Dorsolateral prefrontal cortex (tissue), 120 donors: ENCODE measurements at regions of chr1 and their contacts with region 1.

Region 1: GRCh38 chr1:169106095-169106920 is at the start of gene ATP1B1:
- DNase-seq: peak; percentile 79 to 95 (median 90)
- H3K4me3 ChIP-seq: peak within 1 kb of the TSS; percentile 71 to 99 (median 91)
- H3K27ac ChIP-seq: peak within 1 kb of the TSS; percentile 84 to 99 (median 97)
- H3K27me3 ChIP-seq: no peaks in the 10 kb centered on the region
- CTCF ChIP-seq: peak in 55 of 56 donors; percentile 26 to 89 (median 67)
- total RNA-seq, gene ATP1B1: 155 to 1,070 (median 769) TPM

Region 2: DNA sequence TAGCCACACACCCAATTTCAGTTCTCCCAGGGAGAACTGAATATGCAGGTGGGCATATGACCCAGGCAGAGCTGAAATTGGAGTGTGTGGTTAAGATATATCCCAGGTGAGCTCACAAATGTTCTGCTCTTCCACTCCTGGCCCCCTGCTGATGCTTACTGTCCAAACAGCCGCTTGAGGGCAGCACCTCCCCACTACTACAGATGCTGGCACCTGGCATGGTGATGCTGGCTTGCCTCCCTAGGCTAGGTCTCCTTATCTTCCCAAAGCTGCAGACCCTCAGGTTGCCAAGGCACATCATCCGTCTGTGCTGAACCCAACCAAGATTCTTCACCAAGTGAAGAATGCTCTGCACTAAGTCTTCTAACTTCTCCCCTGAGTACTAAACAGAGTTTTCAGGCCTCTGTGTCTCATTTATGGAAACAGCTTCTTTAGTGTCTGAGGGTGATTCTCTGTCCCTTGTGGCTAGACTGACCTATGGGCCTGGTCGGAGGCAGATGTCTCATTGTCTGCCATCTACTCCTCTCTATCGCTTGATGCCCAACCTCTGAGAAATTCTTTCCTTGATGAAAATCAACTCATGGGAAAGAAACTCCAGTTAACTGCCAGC is 502.7 kb before region 1 on chr1:
- intact Hi-C with region 1: loop called in 1 of 2 experiments (anchors 10 kb)
- DNase-seq: peak; percentile 66 to 89 (median 80)
- H3K4me3 ChIP-seq: no peak overlapping the region
- H3K27ac ChIP-seq: peak overlapping the region in 3 of 59 donors; percentile 2 to 13 (median 9)
- H3K27me3 ChIP-seq: no peaks in the 10 kb centered on the region
- CTCF ChIP-seq: peak; percentile 25 to 93 (median 85)

Region 3: DNA sequence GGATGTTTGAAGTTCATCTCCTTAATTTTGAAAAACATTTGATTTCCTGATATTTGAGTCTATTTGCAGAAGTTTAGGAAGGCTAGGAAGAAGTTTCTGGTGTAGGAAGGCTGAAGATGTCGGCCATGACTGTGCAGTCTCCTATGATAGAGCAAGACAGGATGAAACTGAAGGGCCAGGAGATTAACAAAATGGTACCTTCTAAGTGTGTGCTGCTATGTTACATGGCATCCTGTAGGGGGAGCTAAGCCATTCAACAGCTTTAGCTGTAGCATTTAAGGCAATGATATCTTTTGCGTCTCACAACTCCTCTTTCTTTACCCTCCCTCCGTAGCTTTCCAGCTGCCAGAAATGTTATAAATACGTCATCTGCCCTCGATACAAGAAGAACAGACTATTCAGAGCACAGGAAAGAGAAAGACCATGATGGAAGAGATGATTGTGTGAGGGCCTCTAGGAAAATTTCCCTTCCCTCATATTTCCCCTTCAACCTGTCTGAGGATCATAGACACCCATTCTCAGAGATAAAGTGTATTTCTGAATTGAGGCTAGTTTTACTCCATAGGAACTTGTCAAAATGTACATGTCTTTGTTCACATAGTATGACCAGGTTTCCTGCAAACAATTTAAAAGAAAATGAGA is 468.8 kb before region 1 on chr1:
- intact Hi-C with region 1: loop called in 1 of 2 experiments (anchors 2 kb)
- DNase-seq: no peak
- H3K4me3 ChIP-seq: no peak overlapping the region
- H3K27ac ChIP-seq: peak overlapping the region in 46 of 59 donors; percentile 0 to 84 (median 64)
- H3K27me3 ChIP-seq: no peaks in the 10 kb centered on the region
- CTCF ChIP-seq: peak; percentile 43 to 83 (median 64)

Region 4: GRCh38 chr1:168845140-168845539 is 261.2 kb before region 1 on chr1:
- intact Hi-C with region 1: loop called in 1 of 2 experiments (anchors 5 kb)
- DNase-seq: no peak
- H3K4me3 ChIP-seq: no peak overlapping the region
- H3K27ac ChIP-seq: peak overlapping the region in 30 of 59 donors; percentile 5 to 90 (median 68)
- H3K27me3 ChIP-seq: no peaks in the 10 kb centered on the region
- CTCF ChIP-seq: no peak

Region 5: GRCh38 chr1:169091480-169091941 is 14.8 kb before region 1 on chr1:
- intact Hi-C with region 1: loop called (anchors 2 kb)
- DNase-seq: peak in 3 of 10 donors; percentile 49 to 70 (median 67)
- H3K4me3 ChIP-seq: peak overlapping the region in 1 of 59 donors; percentile 4
- H3K27ac ChIP-seq: peak overlapping the region; percentile 77 to 99 (median 95)
- H3K27me3 ChIP-seq: no peaks in the 10 kb centered on the region
- CTCF ChIP-seq: peak in 1 of 56 donors; percentile 14